ENCODE measurements at regions of chr13 and their contacts with region 1.

Region 1: GRCh38 chr13:40922437-40923040 is 96.6 kb downstream of the ELF1 start:
- DNase-seq: peak in 2 of 42 donors; percentile 18 to 20

Region 2: DNA sequence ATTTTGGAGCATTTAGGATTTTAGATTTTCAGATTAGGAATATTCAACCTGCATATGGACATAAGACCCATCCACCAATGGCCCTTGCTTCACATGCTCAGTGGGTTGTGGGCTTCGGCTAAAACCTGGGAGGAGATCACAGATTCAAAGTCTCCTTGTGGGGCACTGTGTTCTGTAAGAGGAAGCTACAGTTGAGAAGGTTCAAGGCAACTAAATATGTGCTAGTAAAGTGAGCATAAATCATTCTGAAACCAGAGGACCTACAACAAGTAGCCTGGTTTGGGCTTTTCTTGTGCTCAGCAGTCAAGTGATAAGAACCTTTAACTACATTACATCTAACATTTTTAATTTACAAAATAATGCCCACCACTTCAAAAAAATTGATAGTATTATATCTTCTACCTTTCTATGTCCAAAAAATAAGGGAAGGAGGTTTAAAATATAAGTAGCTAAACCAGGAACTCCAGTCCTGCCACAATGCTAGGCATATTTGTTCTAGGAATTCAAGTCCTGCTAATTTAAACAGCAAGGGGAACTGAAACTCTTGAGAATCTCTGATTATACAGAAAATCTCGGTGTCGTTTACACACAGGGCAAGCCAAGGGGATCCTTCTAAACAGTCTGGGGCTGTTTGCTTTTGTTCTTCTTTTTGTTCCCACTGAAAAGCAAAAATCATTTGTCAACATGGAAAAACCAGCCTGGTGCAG is 292.7 kb before region 1 on chr13:
- intact Hi-C with region 1: no loop called
- DNase-seq: no peak

Region 3: GRCh38 chr13:40770934-40771618 is 151.5 kb before region 1 on chr13 and contains the start of gene MRPS31:
- intact Hi-C with region 1: loop called (anchors 5 kb)
- DNase-seq: peak; percentile 91 to 98 (median 95)

Region 4: GRCh38 chr13:40895227-40896184 is 27.0 kb before region 1 on chr13:
- intact Hi-C with region 1: no loop called
- DNase-seq: no peak

Region 5: GRCh38 chr13:40992678-40993518 is 70.4 kb after region 1 on chr13:
- intact Hi-C with region 1: loop called (anchors 10 kb)
- DNase-seq: no peak

Region 6: DNA sequence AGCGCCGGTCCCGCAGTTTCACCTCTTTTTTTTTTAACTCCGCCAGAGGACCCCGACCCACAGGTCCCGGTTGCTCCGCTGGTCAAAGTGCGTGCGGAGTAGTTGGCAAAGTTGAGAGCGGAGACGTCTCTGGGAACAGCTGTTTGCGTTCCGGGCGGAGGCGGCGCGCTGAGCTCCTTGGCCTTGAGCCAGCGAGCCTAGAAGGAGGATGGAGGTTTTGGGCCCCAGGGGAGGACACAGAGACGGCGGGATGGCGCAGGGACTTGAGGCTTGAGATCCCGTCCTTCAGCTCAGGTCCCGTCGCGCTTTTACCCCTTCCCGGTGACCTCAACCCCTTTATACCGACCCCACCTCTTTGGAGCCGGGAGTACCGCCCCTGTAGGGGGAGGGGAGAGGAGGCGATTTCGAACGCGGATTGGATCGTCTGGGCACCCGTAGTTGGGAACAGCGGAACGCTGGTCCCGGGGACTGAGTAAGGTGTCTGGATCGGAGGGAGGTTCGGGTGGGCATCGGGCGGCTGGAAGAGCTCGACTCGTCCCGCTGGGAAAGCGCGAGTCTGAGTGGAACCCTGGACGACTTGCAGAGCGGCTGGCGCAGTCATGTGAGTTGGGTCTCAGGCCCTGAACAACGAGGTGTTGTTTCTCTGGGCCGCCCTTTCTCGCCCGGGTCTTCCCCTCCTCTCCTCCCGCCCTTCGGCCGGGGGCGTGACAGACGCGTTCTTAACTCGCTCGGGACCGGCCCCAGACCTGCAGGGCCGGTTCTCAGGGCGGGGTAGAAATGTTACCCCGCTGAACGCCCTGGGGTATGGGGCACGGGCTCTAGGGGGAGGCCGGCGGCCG is 138.8 kb after region 1 on chr13 and contains the start of gene WBP4:
- intact Hi-C with region 1: loop called (anchors 5 kb)
- DNase-seq: peak; percentile 81 to 98 (median 93)

Region 7: DNA sequence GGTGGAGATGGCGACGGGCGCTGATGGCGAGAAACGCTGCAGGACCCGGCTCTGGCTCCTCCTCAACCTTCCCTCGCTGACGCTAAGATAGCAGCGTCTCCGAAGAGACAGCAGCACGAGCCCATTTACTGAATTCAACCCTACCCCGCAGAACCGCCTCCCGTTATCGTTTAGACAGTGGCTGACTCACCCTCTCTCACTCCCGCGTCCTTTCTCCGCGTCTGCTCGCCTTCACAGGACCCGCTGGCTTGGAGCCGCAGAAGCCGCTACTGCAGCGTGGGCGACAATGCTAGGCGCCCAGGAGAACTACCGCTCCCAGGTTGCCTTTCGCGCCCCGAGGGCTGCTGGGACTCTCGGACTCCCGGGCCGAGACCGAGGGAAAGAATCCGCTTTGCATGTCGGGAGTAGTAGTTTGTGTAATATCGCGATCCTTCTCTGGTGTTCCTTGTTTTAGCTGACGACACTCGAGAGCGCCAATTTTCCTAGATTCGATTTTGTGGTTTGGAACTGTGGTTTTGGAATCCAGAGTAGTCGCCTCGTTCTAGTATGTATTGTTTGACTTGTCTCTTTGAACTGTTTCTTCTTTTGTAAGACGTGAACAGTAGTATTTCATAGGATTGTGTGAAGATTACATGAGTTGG is 210.1 kb after region 1 on chr13 and contains the start of gene KBTBD6:
- intact Hi-C with region 1: loop called (anchors 5 kb)
- DNase-seq: peak; percentile 95 to 99 (median 98)